Activated CD4-positive, alpha-beta memory T cell treated with anti-CD3 and anti-CD28 coated beads for 36 hours (primary cell): ENCODE measurements at regions of chr1 and their contacts with region 1.

Region 1: GRCh38 chr1:233440951-233441401 is 113.5 kb downstream of the MAP3K21 start:
- DNase-seq: peak; percentile 9
- H3K4me3 Mint-ChIP-seq: no peak overlapping the region
- H3K27ac Mint-ChIP-seq: no peak overlapping the region
- H3K4me1 Mint-ChIP-seq: no peaks in the 10 kb centered on the region
- H3K27me3 Mint-ChIP-seq: peaks cover 10% of the 10 kb centered on the region

Region 2: DNA sequence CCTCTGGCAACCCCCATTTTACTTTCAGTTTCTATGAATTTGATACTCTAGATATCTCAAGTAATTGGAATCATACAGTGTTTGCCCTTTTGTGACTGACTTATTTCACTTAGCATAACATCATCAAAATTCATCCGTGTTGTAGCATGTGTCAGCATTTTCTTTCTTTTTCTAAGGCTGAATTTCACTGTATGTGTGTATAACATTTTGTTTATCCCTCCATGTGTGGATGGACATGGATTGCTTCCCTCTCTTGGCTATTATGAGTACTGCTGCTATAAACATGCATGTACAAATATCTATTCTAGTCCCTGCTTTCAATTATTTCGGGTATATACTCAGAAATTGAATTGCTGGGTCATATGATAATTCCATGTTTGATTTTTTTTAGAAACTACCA is 16.2 kb before region 1 on chr1:
- CTCF ChIA-PET with region 1: interaction called, 11 read pairs
- POLR2A ChIA-PET with region 1: no interaction called
- intact Hi-C with region 1: no loop called
- DNase-seq: no peak
- H3K4me3 Mint-ChIP-seq: no peak overlapping the region
- H3K27ac Mint-ChIP-seq: no peak overlapping the region
- H3K4me1 Mint-ChIP-seq: peaks cover 6% of the 10 kb centered on the region
- H3K27me3 Mint-ChIP-seq: peaks cover 10% of the 10 kb centered on the region

Region 3: GRCh38 chr1:233490488-233490887 is 49.5 kb after region 1 on chr1:
- CTCF ChIA-PET with region 1: no interaction called
- POLR2A ChIA-PET with region 1: no interaction called
- intact Hi-C with region 1: no loop called
- DNase-seq: no peak
- H3K4me3 Mint-ChIP-seq: no peak overlapping the region
- H3K27ac Mint-ChIP-seq: no peak overlapping the region
- H3K4me1 Mint-ChIP-seq: no peaks in the 10 kb centered on the region
- H3K27me3 Mint-ChIP-seq: peaks cover 17% of the 10 kb centered on the region

Region 4: GRCh38 chr1:233518349-233518748 is 77.4 kb after region 1 on chr1:
- CTCF ChIA-PET with region 1: interaction called, 11 read pairs
- POLR2A ChIA-PET with region 1: no interaction called
- intact Hi-C with region 1: no loop called
- DNase-seq: peak; percentile 50
- H3K4me3 Mint-ChIP-seq: no peak overlapping the region
- H3K27ac Mint-ChIP-seq: no peak overlapping the region
- H3K4me1 Mint-ChIP-seq: peaks cover 2% of the 10 kb centered on the region
- H3K27me3 Mint-ChIP-seq: peaks cover 2% of the 10 kb centered on the region

Region 5: DNA sequence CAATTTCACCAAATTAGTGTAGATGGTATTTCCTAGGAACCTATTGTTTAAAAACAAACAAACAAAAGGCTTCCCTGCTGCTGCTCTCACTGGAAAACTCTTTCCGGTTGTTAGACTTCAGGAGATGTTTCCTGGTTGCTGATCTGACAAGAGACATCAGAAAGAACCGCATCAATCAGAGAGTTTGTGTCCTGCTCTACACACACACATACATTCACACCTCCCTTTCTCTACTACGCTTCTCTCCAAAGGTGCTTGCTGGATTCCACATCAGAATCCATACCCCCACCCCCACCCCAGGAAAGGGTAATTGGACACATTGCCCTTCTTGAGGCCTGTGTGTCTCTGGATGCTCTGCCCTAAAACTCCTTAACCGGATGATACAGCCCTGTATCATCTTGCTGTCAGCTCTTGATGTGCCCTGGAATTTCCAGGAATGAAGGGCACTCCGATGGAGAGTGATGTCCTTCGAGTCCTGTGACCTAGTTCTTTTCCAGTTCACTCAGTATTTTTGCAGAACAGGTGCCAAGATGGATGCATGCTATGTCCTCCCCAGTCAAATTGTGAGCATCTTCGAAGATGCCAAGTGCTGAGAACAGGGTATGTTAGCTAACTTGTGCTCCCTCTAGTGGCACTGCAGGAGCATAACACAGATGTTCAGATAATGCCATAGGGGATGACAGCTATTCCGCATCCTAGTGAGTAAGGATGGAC is 349.8 kb after region 1 on chr1:
- CTCF ChIA-PET with region 1: interaction called, 66 read pairs
- POLR2A ChIA-PET with region 1: no interaction called
- intact Hi-C with region 1: loop called (anchors 1 kb)
- DNase-seq: peak; percentile 34
- H3K4me3 Mint-ChIP-seq: no peak overlapping the region
- H3K27ac Mint-ChIP-seq: no peak overlapping the region
- H3K4me1 Mint-ChIP-seq: no peaks in the 10 kb centered on the region
- H3K27me3 Mint-ChIP-seq: peaks cover 14% of the 10 kb centered on the region

Region 6: GRCh38 chr1:234065794-234066447 is 624.9 kb after region 1 on chr1:
- CTCF ChIA-PET with region 1: interaction called, 55 read pairs
- POLR2A ChIA-PET with region 1: no interaction called
- intact Hi-C with region 1: loop called (anchors 2 kb)
- DNase-seq: peak; percentile 76
- H3K4me3 Mint-ChIP-seq: no peak overlapping the region
- H3K27ac Mint-ChIP-seq: no peak overlapping the region
- H3K4me1 Mint-ChIP-seq: no peaks in the 10 kb centered on the region
- H3K27me3 Mint-ChIP-seq: peaks cover 12% of the 10 kb centered on the region